ENCODE measurements at regions of chr2 and their contacts with region 1.

Region 1: DNA sequence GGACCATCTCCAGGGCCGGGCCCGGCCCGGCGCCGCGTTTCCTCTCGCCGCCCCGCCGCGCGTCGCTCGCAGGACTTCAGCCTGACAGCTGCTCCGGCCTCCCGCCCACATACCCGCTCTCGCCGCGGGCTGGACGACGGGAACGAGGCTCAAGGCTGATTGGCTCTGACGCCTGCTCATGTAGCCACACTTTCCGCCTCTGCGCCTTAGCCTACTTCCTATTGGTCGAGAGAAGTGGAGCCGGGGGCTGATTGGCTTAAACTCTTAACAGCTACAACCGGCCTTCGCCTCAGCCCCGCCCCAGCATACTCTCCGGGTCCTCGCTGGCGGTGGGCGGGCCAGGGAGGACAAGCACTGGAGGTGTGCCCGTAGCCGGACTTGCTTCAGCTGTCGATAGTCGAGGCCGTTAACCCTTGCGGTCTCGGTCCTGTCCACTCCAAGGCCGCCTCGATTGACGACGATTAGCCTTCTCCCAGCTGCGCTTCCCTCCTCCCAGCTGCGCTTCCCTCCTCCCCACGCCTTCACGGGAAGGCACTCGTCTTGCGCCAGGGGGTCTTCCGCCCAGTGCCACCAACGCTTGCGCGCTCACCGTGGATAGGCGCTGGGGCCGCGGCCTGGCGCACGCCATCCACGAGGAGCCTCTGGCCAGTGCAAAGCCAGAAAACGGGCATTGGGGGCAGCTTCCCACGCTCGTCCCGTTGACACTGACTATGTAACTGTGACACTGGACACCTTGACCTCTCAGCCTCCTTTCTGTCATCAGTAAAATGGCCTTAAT is at the start of gene PRADC1:
- DNase-seq: peak; percentile 84 to 98 (median 90)
- ATAC-seq: peak; percentile 77
- H3K4me3 ChIP-seq: peak within 1 kb of the TSS; percentile 98
- H3K4me3 Mint-ChIP-seq: peak within 1 kb of the TSS; percentile 96
- H3K27ac ChIP-seq: peak within 1 kb of the TSS; percentile 82 to 90
- H3K27ac Mint-ChIP-seq: peak within 1 kb of the TSS; percentile 98
- H3K4me1 ChIP-seq: peaks cover 39% of the 10 kb centered on the region
- H3K4me1 Mint-ChIP-seq: peaks cover 50% of the 10 kb centered on the region
- H3K27me3 ChIP-seq: no peaks in the 10 kb centered on the region
- H3K27me3 Mint-ChIP-seq: no peaks in the 10 kb centered on the region
- CTCF ChIP-seq: no peak
- total RNA-seq, gene PRADC1: 2.9 to 3.0 TPM

Region 2: DNA sequence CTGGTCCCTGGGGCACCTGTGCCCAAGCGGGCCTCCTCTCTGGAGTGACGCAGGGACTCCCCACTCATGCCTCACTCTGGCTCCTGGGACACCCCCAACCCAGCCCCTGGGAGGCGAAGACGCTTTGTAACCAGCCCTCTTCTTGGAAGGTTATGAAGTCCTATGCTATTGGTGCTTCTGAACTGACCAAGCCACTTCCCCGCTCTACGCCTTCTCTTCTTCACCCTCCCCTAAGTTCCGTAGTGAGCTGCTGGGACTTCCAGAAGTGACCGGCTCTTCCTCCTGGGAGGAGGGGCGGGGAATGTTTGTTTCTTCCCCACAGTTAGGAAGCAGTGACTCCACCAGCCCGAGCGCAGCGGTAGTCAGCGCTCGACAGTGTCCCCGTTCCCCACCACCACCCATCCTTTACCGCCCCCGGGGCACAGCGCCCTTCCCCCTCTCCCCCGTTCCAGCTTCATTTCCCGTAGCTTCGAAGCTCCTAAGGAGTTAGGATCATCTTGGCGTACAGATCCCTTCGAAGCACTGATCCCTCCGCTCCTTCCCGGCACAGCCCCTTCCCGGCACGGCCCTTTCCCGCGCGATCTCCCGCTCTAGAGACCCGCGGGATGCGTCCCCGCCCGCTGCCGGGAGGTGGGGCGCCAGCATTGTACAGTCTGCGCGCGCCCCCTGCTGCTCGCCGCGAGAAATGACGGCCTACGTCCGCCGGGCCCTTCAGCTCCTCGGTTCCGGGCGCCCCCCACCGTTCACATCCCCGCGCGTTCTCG is 56.3 kb before region 1 on chr2:
- CTCF ChIA-PET with region 1: interaction called, 31 read pairs
- POLR2A ChIA-PET with region 1: interaction called, 10 read pairs
- intact Hi-C with region 1: no loop called
- DNase-seq: peak; percentile 77 to 95 (median 86)
- ATAC-seq: peak; percentile 92
- H3K4me3 ChIP-seq: peak overlapping the region; percentile 70
- H3K4me3 Mint-ChIP-seq: peak overlapping the region; percentile 92
- H3K27ac ChIP-seq: no peak overlapping the region
- H3K27ac Mint-ChIP-seq: no peak overlapping the region
- H3K4me1 ChIP-seq: peaks cover 32% of the 10 kb centered on the region
- H3K4me1 Mint-ChIP-seq: peaks cover 15% of the 10 kb centered on the region
- H3K27me3 ChIP-seq: peaks cover 20 to 43% of the 10 kb centered on the region in 2 experiments
- H3K27me3 Mint-ChIP-seq: peaks cover 46% of the 10 kb centered on the region
- CTCF ChIP-seq: peak; percentile 98

Region 3: DNA sequence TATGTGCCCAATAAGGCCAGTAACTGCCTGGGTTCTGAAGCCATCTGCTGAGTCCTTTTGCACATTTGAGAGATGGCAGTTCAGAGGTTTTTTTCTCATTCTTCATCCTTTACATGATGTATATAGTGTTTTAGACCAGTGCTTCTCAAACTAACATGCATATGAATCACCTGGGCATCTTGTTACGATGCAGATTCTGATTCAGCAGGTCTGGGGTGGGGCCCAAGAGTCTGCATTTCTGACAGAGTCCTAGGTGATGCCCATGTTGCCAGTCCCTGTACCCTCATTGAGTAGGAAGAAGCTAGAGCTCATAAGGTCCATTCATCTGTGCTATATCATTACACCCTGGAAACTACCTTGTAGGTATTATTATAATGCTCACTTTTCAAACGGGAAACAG is 15.5 kb before region 1 on chr2:
- CTCF ChIA-PET with region 1: interaction called, 24 read pairs
- POLR2A ChIA-PET with region 1: interaction called, 22 read pairs
- intact Hi-C with region 1: loop called (anchors 1 kb)
- DNase-seq: no peak
- ATAC-seq: no peak
- H3K4me3 ChIP-seq: no peak overlapping the region
- H3K4me3 Mint-ChIP-seq: peak overlapping the region; percentile 27
- H3K27ac ChIP-seq: no peak overlapping the region
- H3K27ac Mint-ChIP-seq: no peak overlapping the region
- H3K4me1 ChIP-seq: peaks cover 24% of the 10 kb centered on the region
- H3K4me1 Mint-ChIP-seq: peaks cover 30% of the 10 kb centered on the region
- H3K27me3 ChIP-seq: no peaks in the 10 kb centered on the region
- H3K27me3 Mint-ChIP-seq: no peaks in the 10 kb centered on the region
- CTCF ChIP-seq: no peak

Region 4: GRCh38 chr2:73257425-73258125 is 24.2 kb after region 1 on chr2:
- CTCF ChIA-PET with region 1: no interaction called
- POLR2A ChIA-PET with region 1: interaction called, 20 read pairs
- intact Hi-C with region 1: no loop called
- DNase-seq: peak in 8 of 14 experiments; percentile 11 to 62 (median 40)
- ATAC-seq: no peak
- H3K4me3 ChIP-seq: no peak overlapping the region
- H3K4me3 Mint-ChIP-seq: no peak overlapping the region
- H3K27ac ChIP-seq: no peak overlapping the region
- H3K27ac Mint-ChIP-seq: no peak overlapping the region
- H3K4me1 ChIP-seq: peaks cover 13% of the 10 kb centered on the region
- H3K4me1 Mint-ChIP-seq: no peaks in the 10 kb centered on the region
- H3K27me3 ChIP-seq: no peaks in the 10 kb centered on the region
- H3K27me3 Mint-ChIP-seq: no peaks in the 10 kb centered on the region
- CTCF ChIP-seq: no peak

Region 5: GRCh38 chr2:73284296-73285158 is 51.2 kb after region 1 on chr2 and contains the start of gene FBXO41:
- CTCF ChIA-PET with region 1: interaction called, 14 read pairs
- POLR2A ChIA-PET with region 1: interaction called, 46 read pairs
- intact Hi-C with region 1: loop called in 1 of 2 experiments (anchors 2 kb)
- DNase-seq: peak; percentile 36 to 79 (median 59)
- ATAC-seq: peak; percentile 79
- H3K4me3 ChIP-seq: peak within 1 kb of the TSS; percentile 73
- H3K4me3 Mint-ChIP-seq: peak within 1 kb of the TSS; percentile 91
- H3K27ac ChIP-seq: peak within 1 kb of the TSS in 1 of 2 donors; percentile 33
- H3K27ac Mint-ChIP-seq: peak within 1 kb of the TSS; percentile 37
- H3K4me1 ChIP-seq: peaks cover 22% of the 10 kb centered on the region
- H3K4me1 Mint-ChIP-seq: peaks cover 22% of the 10 kb centered on the region
- H3K27me3 ChIP-seq: no peaks in the 10 kb centered on the region
- H3K27me3 Mint-ChIP-seq: peaks cover 15% of the 10 kb centered on the region
- CTCF ChIP-seq: no peak
- total RNA-seq, gene FBXO41: 14.0 to 16.0 TPM

Region 6: GRCh38 chr2:73736855-73737779 is 503.8 kb after region 1 on chr2 and contains the start of gene TPRKB:
- CTCF ChIA-PET with region 1: interaction called, 3 read pairs
- POLR2A ChIA-PET with region 1: interaction called, 19 read pairs
- intact Hi-C with region 1: loop called (anchors 5 kb)
- DNase-seq: peak; percentile 85 to 98 (median 93)
- ATAC-seq: peak; percentile 93
- H3K4me3 ChIP-seq: peak within 1 kb of the TSS; percentile 91
- H3K4me3 Mint-ChIP-seq: peak within 1 kb of the TSS; percentile 91
- H3K27ac ChIP-seq: peak within 1 kb of the TSS; percentile 55 to 62
- H3K27ac Mint-ChIP-seq: peak within 1 kb of the TSS; percentile 76
- H3K4me1 ChIP-seq: peaks cover 15% of the 10 kb centered on the region
- H3K4me1 Mint-ChIP-seq: peaks cover 20% of the 10 kb centered on the region
- H3K27me3 ChIP-seq: no peaks in the 10 kb centered on the region
- H3K27me3 Mint-ChIP-seq: no peaks in the 10 kb centered on the region
- CTCF ChIP-seq: no peak
- total RNA-seq, gene TPRKB: 16.1 to 18.2 TPM

Measured in CD4-positive, alpha-beta T cell (primary cell).